Vagina (tissue), 2 donors: ENCODE measurements at regions of chr11 and their contacts with region 1.

Region 1: GRCh38 chr11:67507864-67508485 is at the start of gene CDK2AP2:
- DNase-seq: peak in 1 of 2 donors; percentile 99
- H3K4me3 ChIP-seq: peak within 1 kb of the TSS; percentile 65 to 89
- H3K27ac ChIP-seq: peak within 1 kb of the TSS; percentile 94
- H3K4me1 ChIP-seq: peaks cover 38% of the 10 kb centered on the region
- H3K27me3 ChIP-seq: no peaks in the 10 kb centered on the region
- CTCF ChIP-seq: no peak
- POLR2A ChIP-seq: peak in 1 of 2 donors; percentile 77
- total RNA-seq, gene CDK2AP2: 46.4 TPM

Region 2: DNA sequence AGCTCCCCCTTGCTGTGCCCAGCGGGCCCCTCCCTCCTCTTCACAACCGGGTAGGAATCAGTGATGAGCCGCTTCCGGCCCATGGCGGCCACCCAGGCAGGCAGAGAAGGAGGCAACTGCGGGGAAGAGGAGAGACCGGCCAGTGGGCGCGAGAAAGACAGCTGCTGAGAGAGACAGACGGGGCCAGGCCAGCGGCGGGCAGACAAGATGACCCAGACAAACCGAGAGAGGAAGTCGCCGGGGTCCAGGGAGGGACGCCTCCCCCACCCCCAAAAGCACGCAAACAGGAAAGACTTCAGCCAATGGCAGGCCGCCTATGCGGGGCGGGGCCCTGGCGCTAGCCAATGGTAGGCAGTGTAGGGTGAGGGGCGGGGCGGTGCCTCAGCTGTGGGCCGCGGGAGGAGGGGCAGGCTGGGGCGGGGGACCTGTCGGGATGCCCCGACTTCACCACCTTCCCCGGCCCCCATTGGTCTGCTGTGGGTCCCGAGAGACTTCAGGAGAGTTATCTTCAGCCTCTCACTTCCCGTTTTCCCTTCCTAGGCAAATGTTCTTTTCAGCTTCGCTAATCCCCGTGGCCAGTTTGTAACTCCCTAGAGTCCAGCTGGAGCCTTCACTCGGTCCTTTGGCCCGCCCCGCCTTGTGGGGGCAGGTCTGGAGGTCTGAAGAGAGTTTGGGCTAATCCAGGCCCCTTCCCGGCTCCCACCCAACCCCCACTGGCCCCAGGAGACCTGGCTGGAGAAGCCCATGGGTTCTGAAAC is 154.5 kb before region 1 on chr11 and contains the start of gene POLD4:
- intact Hi-C with region 1: loop called (anchors 10 kb)
- DNase-seq: peak in 1 of 2 donors; percentile 99
- H3K4me3 ChIP-seq: peak within 1 kb of the TSS; percentile 55 to 70
- H3K27ac ChIP-seq: peak within 1 kb of the TSS; percentile 99
- H3K4me1 ChIP-seq: peaks cover 83% of the 10 kb centered on the region
- H3K27me3 ChIP-seq: no peaks in the 10 kb centered on the region
- CTCF ChIP-seq: no peak
- POLR2A ChIP-seq: peak in 1 of 2 donors; percentile 91
- total RNA-seq, gene POLD4: 80.0 TPM

Region 3: GRCh38 chr11:67391304-67392132 is 116.5 kb before region 1 on chr11 and contains the start of gene RAD9A:
- intact Hi-C with region 1: loop called (anchors 1 kb)
- DNase-seq: peak in 1 of 2 donors; percentile 96
- H3K4me3 ChIP-seq: peak within 1 kb of the TSS; percentile 85 to 93
- H3K27ac ChIP-seq: peak within 1 kb of the TSS; percentile 80
- H3K4me1 ChIP-seq: peaks cover 20% of the 10 kb centered on the region
- H3K27me3 ChIP-seq: no peaks in the 10 kb centered on the region
- CTCF ChIP-seq: no peak
- POLR2A ChIP-seq: peak in 1 of 2 donors; percentile 21
- total RNA-seq, gene RAD9A: 20.6 TPM

Region 4: DNA sequence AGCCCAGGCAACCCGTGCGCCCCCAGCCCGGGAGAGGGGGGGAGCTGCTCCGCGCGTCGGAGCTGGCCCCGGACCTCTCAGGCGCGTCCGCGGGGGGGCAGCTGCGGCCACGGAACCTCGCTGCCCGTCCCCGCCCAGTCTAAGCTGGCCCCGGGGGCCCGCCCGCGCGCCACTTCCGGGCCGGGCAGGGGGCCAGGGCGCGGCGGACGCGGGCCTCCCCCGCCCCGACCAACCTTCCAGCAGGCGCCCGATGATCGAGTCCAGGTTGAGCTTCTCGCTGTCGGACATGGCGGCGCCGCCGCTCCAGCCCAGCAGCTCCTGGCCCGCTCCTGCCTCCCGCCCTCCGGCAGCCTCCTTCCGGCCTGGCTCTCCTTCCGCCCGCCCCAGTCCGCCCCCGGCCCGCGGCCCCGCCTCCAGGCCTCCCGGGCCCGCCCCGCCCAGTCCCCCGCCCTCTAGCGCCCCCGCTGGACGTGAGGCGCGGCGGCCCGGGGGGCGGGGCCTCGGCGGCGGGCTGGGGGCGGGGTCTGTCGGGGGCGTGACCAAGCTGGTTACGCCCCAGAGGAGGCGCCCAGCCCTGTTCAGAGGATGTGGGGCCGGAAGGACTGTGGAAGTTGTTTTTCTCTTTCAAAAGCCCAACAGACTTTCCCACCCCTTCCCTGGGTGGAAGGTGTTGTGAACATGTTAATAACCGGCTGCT is 106.3 kb before region 1 on chr11 and contains the start of gene PPP1CA:
- intact Hi-C with region 1: no loop called
- DNase-seq: no peak
- H3K4me3 ChIP-seq: peak within 1 kb of the TSS; percentile 80 to 91
- H3K27ac ChIP-seq: peak within 1 kb of the TSS; percentile 94
- H3K4me1 ChIP-seq: peaks cover 49% of the 10 kb centered on the region
- H3K27me3 ChIP-seq: no peaks in the 10 kb centered on the region
- CTCF ChIP-seq: no peak
- POLR2A ChIP-seq: peak in 1 of 2 donors; percentile 55
- total RNA-seq, gene PPP1CA: 102 TPM

Region 5: GRCh38 chr11:67420646-67421420 is 87.1 kb before region 1 on chr11:
- intact Hi-C with region 1: no loop called
- DNase-seq: peak; percentile 95 to 99
- H3K4me3 ChIP-seq: peak overlapping the region; percentile 59 to 83
- H3K27ac ChIP-seq: peak overlapping the region; percentile 76
- H3K4me1 ChIP-seq: peaks cover 50% of the 10 kb centered on the region
- H3K27me3 ChIP-seq: no peaks in the 10 kb centered on the region
- CTCF ChIP-seq: no peak
- POLR2A ChIP-seq: peak in 1 of 2 donors; percentile 62

Region 6: DNA sequence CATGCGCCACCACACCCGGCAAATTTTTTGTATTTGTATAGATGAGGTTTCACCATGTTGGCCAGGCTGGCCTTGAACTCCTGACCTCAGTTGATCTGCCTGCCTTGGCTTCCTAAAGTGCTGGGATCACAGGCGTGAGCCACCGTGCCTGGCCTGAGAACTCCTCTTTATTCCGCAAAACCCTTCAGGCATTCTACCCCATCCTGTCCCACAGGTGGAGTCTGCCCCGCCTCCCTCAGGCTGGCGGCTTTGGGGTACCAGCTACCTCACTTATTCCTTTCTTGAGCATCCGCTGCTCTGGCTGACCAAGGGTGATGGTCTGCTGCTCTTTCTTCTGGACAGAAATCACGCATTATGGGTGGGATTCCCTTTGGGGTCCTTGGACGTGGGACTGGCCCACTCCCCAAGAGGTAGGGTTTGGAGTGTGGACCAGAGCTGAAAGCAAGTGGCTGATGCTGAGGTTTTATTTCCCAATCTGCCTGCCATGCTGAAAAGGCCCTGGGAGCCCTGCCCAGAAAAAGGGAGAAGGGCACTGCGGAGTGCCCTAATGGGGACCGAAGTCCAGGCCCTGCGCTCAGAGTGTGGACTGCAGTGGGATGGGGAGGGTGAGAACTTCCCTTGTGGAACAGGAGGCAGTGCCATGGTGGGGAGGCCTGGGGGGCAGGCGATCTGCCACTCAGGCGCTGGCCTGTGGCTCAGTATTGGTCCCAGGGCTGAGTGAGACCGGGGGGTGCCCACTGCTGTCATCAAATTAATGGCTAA is 59.9 kb before region 1 on chr11:
- intact Hi-C with region 1: loop called (anchors 1 kb)
- DNase-seq: no peak
- H3K4me3 ChIP-seq: no peak overlapping the region
- H3K27ac ChIP-seq: no peak overlapping the region
- H3K4me1 ChIP-seq: peaks cover 18% of the 10 kb centered on the region
- H3K27me3 ChIP-seq: no peaks in the 10 kb centered on the region
- CTCF ChIP-seq: no peak
- POLR2A ChIP-seq: no peak

Region 7: DNA sequence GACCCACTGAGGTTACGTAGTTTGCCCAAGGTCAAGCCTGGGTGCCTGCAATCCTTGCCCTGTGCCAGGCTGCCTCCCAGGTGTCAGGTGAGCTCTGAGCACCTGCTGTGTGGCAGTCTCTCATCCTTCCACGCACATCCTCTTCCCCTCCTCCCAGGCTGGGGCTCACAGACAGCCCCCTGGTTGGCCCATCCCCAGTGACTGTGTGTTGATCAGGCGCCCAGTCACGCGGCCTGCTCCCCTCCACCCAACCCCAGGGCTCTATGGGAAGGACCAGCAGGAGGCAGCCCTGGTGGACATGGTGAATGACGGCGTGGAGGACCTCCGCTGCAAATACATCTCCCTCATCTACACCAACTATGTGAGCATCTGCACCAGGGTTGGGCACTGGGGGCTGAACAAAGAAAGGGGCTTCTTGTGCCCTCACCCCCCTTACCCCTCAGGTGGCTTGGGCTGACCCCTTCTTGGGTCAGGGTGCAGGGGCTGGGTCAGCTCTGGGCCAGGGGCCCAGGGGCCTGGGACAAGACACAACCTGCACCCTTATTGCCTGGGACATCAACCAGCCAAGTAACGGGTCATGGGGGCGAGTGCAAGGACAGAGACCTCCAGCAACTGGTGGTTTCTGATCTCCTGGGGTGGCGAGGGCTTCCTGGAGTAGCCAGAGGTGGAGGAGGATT is 77.0 kb after region 1 on chr11:
- intact Hi-C with region 1: loop called (anchors 5 kb)
- DNase-seq: no peak
- H3K4me3 ChIP-seq: peak overlapping the region; percentile 97
- H3K27ac ChIP-seq: peak overlapping the region; percentile 99
- H3K4me1 ChIP-seq: peaks cover 37% of the 10 kb centered on the region
- H3K27me3 ChIP-seq: no peaks in the 10 kb centered on the region
- CTCF ChIP-seq: no peak
- POLR2A ChIP-seq: peak in 1 of 2 donors; percentile 12